Kidney (tissue), 22 donors: ENCODE measurements at regions of chr5 and their contacts with region 1.

Region 1: DNA sequence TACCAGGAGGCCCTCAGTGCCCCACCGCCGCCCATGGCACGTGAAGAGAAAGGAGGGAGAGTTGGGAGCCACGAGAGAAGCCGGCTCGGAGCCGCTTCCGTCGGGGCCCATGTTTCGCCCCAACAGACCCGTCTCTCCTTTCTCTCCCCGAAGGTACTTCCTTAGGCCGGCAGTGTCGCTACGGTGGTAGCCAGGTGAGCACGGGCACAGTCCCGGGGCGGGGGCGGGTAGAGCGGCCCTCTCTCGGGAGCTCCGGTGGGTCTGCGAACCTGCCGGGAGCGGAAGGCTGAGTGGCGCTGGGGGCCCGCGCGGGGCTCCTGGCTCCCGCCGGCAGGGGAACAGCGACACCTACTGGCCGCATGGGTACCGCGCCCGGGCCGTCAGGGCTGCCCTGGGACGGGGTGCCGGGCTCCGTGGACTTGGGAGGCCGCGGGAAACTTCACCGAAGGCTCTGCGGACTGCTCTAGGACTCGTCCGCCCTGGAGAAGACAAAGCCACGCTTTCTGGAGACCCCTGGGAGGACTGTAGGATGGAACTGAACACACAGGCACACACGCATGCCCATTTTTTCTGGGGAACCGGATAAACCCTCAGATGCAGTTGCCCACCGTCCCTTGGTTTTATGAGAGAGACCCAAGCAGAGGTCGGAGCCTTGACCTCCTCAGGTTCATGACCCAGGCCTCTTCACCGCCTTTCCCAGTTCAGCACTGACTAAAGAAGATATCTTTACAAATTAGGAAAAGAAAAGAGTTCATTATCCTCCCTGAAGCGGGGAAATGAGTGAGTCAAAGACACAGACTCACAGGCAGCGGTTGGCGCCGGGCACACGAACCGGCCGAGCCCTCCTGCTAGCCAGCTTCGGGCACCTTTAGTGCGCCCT is 202.5 kb downstream of the MEF2C start:
- DNase-seq: peak; percentile 79 to 85 (median 82)
- H3K4me3 ChIP-seq: peak overlapping the region in 1 of 3 donors; percentile 44
- H3K27ac ChIP-seq: no peak overlapping the region
- H3K4me1 ChIP-seq: no peaks in the 10 kb centered on the region
- H3K27me3 ChIP-seq: peaks cover 83% of the 10 kb centered on the region
- CTCF ChIP-seq: peak; percentile 82

Region 2: DNA sequence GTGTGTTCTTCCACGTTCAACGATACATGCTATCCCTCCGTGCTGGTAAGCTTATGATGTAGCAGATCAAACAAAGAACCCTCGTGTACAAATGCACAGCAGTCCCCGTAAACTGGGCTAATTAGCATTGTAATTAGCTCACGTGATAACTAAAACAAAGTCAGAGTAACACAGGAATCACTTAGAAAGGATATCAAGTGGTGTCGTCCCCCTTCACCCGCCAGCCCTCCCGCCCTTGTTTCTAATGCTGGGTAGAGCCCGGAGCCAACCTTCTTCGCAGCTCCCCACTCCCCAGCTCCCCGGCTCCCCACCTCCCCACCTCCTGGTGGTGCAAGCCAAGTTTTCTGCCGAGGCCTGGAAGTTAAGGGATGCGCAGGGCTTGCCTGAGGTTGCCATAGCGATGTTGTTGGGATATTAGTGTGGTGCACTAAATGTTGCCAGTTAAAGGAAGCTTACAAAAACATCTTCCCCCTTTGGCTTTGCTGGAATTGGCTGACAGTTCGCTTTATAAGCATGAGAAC is 909.8 kb before region 1 on chr5:
- intact Hi-C with region 1: loop called (anchors 10 kb)
- DNase-seq: peak in 1 of 5 donors; percentile 5
- H3K4me3 ChIP-seq: no peak overlapping the region
- H3K27ac ChIP-seq: no peak overlapping the region
- H3K4me1 ChIP-seq: no peaks in the 10 kb centered on the region
- H3K27me3 ChIP-seq: no peaks in the 10 kb centered on the region
- CTCF ChIP-seq: no peak

Region 3: DNA sequence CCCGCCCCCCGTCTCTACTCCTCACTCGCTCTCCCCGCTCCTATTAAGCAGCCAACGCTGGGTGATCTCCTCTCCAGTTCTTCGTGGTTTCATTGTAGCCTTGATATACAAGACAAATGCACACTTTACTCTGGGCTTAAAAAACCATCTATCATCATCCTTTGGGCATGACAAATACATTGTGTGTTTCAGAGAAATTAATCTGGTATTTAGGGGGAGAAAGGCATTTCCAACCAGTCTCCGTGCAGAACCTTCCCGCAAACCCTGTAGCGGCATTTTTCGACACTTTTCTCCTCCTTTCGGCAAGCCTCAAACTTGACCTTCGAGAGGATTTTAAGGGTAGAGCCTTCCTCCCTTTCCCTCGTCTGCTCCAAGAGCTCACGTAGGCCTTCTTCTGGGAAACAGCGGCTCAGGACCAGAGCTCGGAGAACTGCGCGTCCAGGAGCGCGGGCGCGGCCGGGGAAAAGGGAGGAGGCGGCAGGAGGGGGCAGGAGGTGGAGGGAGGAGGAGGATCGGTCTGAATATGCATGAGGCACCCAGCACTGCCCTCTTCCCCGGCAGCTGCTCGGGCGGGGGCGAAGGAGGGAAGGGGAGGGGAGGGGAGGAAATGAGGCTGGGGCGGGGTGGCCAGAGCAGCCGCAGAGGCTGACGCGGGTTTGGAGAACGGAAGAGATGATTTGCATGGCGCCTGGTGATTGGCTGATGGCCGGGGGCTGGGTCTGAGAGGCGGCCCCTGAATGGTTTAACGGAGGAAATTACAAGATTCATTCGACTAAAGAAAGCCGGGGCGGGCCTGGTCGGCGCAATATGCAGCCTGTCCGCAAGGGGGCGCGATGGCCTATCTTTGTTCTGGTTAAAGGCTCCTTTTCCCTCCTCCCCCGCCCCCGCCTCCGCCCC is 539.4 kb before region 1 on chr5:
- intact Hi-C with region 1: loop called (anchors 10 kb)
- DNase-seq: peak; percentile 98 to 99 (median 98)
- H3K4me3 ChIP-seq: peak overlapping the region; percentile 70 to 82 (median 75)
- H3K27ac ChIP-seq: no peak overlapping the region
- H3K4me1 ChIP-seq: peaks cover 0 to 19% (median 3%) of the 10 kb centered on the region in 3 donors
- H3K27me3 ChIP-seq: peaks cover 51% of the 10 kb centered on the region
- CTCF ChIP-seq: peak; percentile 57

Region 4: GRCh38 chr5:88761269-88761850 is 80.9 kb after region 1 on chr5:
- intact Hi-C with region 1: no loop called
- DNase-seq: no peak
- H3K4me3 ChIP-seq: no peak overlapping the region
- H3K27ac ChIP-seq: no peak overlapping the region
- H3K4me1 ChIP-seq: no peaks in the 10 kb centered on the region
- H3K27me3 ChIP-seq: no peaks in the 10 kb centered on the region
- CTCF ChIP-seq: no peak